ENCODE measurements at regions of chr13 and their contacts with region 1.

Region 1: GRCh38 chr13:110244071-110244830 is 62.7 kb downstream of the COL4A1 start:
- DNase-seq: peak in 1 of 2 experiments; percentile 35
- H3K4me3 ChIP-seq: no peak overlapping the region
- H3K27ac ChIP-seq: no peak overlapping the region
- H3K4me1 ChIP-seq: peaks cover 0 to 14% (median 2%) of the 10 kb centered on the region in 4 experiments; a peak in 5 of 7 replicates
- H3K27me3 ChIP-seq: no peaks in the 10 kb centered on the region
- CTCF ChIP-seq: no peak
- EP300 ChIP-seq: no peak
- POLR2A ChIP-seq: no peak
- RAD21 ChIP-seq: no peak

Region 2: DNA sequence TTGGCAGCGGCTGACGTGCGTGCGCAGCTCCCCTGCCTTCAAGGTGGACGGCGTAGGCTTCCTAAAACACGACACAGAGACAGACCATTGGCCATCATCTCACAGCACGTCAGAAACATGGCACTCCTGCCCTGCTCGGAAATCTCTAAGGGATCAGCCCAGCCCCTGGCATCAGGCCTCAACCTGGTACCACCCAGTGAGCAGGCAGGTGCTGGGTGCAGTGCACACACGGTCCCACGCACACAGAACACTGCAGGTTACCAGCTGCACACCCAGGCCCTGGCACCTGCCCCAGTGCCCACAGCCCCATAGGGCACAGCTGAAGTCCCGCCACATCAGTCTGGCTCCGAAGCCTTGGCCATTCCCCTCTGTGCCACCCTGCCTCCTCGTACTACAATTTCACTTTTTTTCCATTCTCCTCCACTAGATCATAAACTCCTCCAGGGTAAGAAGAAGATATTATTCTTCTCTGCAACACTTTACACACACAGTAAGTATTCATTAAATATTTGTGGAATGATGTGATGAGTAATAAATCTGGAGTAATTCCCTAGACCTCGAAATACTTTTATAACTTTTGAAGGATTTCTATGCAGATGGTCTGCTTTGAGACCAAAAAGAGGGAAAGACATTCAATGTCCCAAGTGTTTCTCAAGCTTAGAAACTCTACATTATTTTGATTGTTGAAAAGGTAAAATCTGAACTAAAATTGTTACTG is 93.7 kb before region 1 on chr13:
- CTCF ChIA-PET with region 1: no interaction called
- POLR2A ChIA-PET with region 1: no interaction called
- DNase-seq: no peak
- H3K4me3 ChIP-seq: no peak overlapping the region
- H3K27ac ChIP-seq: no peak overlapping the region
- H3K4me1 ChIP-seq: peaks cover 0 to 2% (median 0%) of the 10 kb centered on the region in 4 experiments; a peak in 3 of 7 replicates
- H3K27me3 ChIP-seq: no peaks in the 10 kb centered on the region
- CTCF ChIP-seq: no peak
- EP300 ChIP-seq: no peak
- POLR2A ChIP-seq: no peak
- RAD21 ChIP-seq: no peak

Region 3: DNA sequence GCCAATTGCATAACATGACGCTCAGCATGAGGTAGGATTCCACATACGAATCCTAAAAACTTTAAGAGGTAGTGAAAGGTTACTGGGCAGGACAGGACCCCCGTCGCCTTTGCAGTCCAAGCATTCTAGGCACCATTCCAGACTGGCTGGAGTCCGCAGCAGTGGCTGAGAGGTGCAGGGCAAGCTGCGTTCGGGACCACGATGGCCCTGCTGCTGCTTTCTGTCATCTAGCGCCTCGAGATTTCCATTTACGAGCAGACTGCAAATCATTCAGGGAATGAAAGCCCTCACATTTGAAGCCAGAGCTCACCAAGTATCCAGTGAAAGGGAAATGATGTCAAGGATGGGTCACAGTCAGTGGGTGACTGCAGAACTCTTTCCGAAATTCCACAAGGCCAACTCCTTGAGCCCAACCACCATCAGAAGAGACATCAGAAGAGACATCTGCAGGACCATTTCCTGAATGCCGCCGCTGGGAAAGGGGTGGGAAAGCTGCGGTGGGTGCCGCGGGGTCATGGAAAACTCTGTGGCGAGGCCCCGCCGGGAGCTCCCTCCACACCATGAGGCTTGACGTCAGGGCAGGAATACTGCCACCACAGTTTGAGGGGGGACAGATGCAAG is 25.6 kb before region 1 on chr13:
- CTCF ChIA-PET with region 1: interaction called, 24 read pairs
- POLR2A ChIA-PET with region 1: no interaction called
- DNase-seq: no peak
- H3K4me3 ChIP-seq: no peak overlapping the region
- H3K27ac ChIP-seq: no peak overlapping the region
- H3K4me1 ChIP-seq: peaks cover 0 to 2% (median 0%) of the 10 kb centered on the region in 4 experiments; a peak in 1 of 7 replicates
- H3K27me3 ChIP-seq: no peaks in the 10 kb centered on the region
- CTCF ChIP-seq: no peak
- EP300 ChIP-seq: no peak
- POLR2A ChIP-seq: no peak
- RAD21 ChIP-seq: no peak

Region 4: GRCh38 chr13:110233181-110233950 is 10.9 kb before region 1 on chr13:
- CTCF ChIA-PET with region 1: interaction called, 29 read pairs
- POLR2A ChIA-PET with region 1: interaction called, 3 read pairs
- DNase-seq: peak in 1 of 2 experiments; percentile 27
- H3K4me3 ChIP-seq: no peak overlapping the region
- H3K27ac ChIP-seq: no peak overlapping the region
- H3K4me1 ChIP-seq: peaks cover 0 to 4% (median 0%) of the 10 kb centered on the region in 4 experiments; a peak in 3 of 7 replicates
- H3K27me3 ChIP-seq: no peaks in the 10 kb centered on the region
- CTCF ChIP-seq: no peak
- EP300 ChIP-seq: no peak
- POLR2A ChIP-seq: no peak
- RAD21 ChIP-seq: no peak

Region 5: DNA sequence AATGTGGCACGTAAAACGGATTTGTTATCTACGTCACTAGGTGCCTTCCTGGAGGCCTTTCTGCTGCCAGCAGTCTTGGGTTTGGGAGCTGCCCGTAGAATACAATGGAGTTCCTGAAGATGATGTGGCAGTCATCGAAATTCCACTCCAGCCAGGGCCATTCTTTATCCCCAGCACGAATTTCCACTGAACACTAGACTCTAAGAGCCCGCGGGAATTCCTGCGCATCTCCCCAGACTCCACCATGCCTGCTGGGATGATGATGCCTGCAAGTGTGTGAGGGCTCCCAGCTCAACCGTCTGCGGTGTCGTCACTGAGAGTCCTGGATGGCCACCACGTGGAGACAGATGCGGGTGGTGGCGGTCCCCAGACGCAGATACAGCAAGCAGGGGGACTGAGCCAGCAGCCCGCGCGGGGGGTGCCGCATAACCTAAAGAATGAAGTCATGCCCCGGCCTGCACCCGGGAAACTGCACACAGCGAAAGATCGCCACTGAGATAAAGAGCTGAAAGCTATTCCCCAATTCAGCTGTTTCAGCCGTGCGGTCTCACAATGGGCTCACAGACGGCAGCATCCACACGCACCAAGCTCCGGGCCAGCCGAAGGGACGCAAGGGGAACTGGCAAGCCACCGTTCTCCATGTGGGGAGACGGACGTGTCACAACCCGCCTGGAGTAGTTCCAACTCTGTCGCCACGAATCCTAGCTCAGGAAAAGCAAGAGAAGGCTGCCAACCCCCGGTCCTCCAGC is 21.6 kb after region 1 on chr13:
- CTCF ChIA-PET with region 1: interaction called, 30 read pairs
- POLR2A ChIA-PET with region 1: no interaction called
- DNase-seq: peak in 1 of 2 experiments; percentile 49
- H3K4me3 ChIP-seq: no peak overlapping the region
- H3K27ac ChIP-seq: no peak overlapping the region
- H3K4me1 ChIP-seq: peaks cover 14 to 37% (median 19%) of the 10 kb centered on the region in 4 experiments
- H3K27me3 ChIP-seq: no peaks in the 10 kb centered on the region
- CTCF ChIP-seq: no peak
- EP300 ChIP-seq: no peak
- POLR2A ChIP-seq: no peak
- RAD21 ChIP-seq: no peak

Measured in H1 (cell line).